Ascending aorta (tissue), 2 donors: ENCODE measurements at regions of chr3 and their contacts with region 1.

Region 1: DNA sequence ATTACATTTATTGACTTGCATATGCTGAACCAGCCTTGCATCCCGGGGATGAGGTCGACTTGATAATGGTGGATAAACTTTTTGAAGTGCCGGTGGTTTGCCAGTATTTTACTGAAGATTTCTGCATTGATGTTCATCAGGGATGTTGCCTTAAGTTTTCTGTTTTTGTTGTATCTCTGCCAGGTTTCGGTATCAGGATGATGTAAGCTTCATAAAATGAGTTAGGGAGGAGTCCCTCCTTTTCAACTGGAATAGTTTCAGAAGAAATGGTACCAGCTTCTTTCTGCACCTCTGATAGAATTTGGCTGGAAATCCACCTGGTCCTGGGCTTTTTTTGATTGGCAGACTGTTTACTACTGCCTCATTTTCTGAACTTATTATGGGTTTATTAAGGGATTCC is 250.8 kb downstream of the TBC1D5 start:
- DNase-seq: no peak
- H3K4me3 ChIP-seq: no peak overlapping the region
- H3K27ac ChIP-seq: no peak overlapping the region
- H3K4me1 ChIP-seq: peaks cover 0 to 8% of the 10 kb centered on the region in 2 donors
- H3K27me3 ChIP-seq: no peaks in the 10 kb centered on the region
- CTCF ChIP-seq: no peak

Region 2: DNA sequence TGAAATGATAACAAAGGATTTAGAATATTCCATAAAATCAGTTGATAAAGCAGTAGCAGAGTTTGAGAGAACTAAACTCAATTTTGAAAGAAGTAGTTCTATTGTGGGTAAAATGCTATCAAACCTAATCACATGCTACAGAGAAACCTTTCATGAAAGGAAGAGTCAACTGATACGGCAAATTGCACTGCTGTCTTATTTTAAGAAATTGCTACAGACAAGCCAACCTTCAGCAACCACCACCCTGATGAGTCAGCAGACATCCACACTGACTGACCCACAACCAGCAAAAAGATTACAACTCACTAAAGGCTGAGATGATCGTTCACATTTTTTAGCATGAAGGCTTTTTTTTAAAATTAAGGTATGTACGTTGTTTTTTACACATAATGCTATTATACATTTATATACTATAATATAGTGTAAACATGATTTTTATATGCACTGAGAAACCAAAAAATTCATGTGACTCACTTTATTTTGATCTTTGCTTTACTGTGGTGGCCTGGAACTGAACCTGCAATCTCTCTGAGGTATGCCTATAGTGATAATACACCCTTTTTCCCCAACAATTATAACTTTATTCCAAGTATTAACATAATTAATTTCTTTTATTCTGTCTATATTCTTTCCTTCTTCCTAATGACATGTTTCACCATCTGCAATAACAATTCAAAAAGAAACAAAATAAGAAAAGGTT is 140.9 kb after region 1 on chr3:
- intact Hi-C with region 1: loop called (anchors 10 kb)
- DNase-seq: no peak
- H3K4me3 ChIP-seq: no peak overlapping the region
- H3K27ac ChIP-seq: peak overlapping the region in 1 of 2 donors; percentile 38
- H3K4me1 ChIP-seq: peaks cover 5 to 22% of the 10 kb centered on the region in 2 donors
- H3K27me3 ChIP-seq: no peaks in the 10 kb centered on the region
- CTCF ChIP-seq: no peak